PC-3 (cell line): ENCODE measurements at regions of chr19 and their contacts with region 1.

Region 1: DNA sequence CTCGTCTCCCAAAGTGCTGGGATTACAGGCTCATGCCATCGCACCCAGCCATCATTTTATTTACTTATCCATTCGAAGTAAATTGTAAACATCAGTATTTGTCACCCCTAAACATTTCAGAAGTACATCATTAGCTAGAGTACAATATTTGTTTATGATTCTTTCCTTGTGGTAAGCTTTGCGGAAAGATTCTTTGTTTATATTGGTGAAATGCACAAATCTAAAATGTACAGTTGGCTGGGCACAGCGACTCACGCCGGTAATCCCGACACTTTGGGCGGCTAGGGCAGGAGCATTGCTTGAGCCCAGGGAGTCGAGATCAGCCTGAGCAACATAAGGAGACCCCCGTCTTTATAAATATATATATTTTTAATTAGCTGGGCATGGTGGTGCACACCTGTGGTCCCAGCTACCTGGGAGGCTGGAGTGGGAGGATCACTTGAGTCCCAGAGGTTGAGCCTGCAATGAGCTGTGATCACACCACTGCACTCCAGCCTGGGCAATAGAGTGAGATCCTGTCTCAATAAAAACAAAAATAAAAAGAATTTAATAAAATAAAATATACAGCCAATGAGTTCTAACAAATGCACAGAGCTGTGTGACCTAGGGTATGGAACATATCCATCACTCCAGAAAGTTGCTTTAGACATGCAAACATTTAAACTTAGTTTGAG is 10.2 kb downstream of the LGALS7B start:
- DNase-seq: peak; percentile 7
- ATAC-seq: peak; percentile 16
- H3K4me3 ChIP-seq: no peak overlapping the region
- H3K27ac ChIP-seq: peak overlapping the region; percentile 82
- H3K4me1 ChIP-seq: peaks cover 8% of the 10 kb centered on the region
- H3K27me3 ChIP-seq: no peaks in the 10 kb centered on the region
- CTCF ChIP-seq: no peak

Region 2: DNA sequence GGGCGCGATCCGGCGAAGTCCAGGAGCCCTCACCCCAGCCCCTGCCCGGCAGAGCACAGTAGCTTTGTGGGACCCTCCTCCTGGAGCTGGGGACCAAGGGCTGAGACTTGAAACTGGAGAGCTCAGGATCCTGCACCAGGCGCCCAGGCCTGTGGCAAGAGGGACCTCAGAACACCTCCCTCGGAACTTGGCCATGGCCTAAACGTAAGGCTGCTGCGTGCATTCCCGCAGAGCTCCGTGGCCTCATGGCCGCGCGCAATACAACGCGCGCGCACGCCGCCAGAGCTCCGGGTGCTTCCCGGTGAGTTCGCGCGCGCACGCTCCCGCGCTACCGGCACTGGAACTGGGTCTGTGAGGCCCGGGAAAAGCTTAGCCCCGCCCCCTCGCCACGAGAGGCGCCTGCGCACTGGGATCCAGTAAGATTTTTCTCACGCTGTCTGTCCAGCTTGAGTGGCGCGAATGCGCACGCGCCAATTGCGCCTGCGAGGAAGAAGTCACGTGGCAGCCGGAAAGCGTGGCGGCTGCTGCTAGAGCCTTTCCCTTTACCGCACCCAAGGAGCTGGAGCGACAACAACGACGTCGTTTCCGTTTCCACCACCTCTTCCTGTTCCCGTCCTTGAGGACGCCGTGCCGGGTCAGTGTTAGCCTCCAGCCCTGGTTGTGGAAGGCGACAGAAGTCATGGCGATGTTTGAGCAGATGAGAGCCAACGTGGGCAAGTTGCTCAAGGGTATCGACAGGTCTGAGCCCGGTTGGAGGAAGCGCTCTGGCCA is 180.4 kb before region 1 on chr19 and contains the start of gene EIF3K:
- CTCF ChIA-PET with region 1: no interaction called
- POLR2A ChIA-PET with region 1: no interaction called
- intact Hi-C with region 1: no loop called
- DNase-seq: peak; percentile 98
- ATAC-seq: peak; percentile 92
- H3K4me3 ChIP-seq: peak within 1 kb of the TSS; percentile 92
- H3K27ac ChIP-seq: peak within 1 kb of the TSS; percentile 62
- H3K4me1 ChIP-seq: peaks cover 14% of the 10 kb centered on the region
- H3K27me3 ChIP-seq: no peaks in the 10 kb centered on the region
- CTCF ChIP-seq: no peak
- total RNA-seq, gene EIF3K: 310 and 414 TPM in 2 replicates

Region 3: GRCh38 chr19:38736413-38737280 is 62.6 kb before region 1 on chr19:
- CTCF ChIA-PET with region 1: no interaction called
- POLR2A ChIA-PET with region 1: no interaction called
- intact Hi-C with region 1: loop called (anchors 5 kb)
- DNase-seq: peak; percentile 65
- ATAC-seq: no peak
- H3K4me3 ChIP-seq: peak overlapping the region; percentile 52
- H3K27ac ChIP-seq: no peak overlapping the region
- H3K4me1 ChIP-seq: peaks cover 16% of the 10 kb centered on the region
- H3K27me3 ChIP-seq: no peaks in the 10 kb centered on the region
- CTCF ChIP-seq: no peak

Region 4: DNA sequence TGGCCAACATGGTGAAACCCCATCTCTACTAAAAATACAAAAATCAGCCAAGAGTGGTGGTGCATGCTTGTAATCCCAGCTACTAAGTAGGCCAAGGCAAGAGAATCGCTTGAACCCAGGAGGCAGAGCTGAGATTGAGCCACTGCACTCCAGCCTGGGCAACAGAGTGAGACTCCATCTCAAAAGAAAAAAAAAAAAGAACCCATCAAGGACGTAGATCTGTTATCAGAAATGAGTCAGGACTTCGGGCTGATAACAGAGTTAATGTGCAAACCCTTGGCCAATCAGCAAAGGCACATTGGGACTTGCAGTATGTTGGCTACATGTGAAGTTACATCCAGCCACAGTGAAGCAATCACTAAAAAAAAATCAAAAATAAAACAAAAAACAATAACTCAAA is 15.0 kb before region 1 on chr19:
- CTCF ChIA-PET with region 1: no interaction called
- POLR2A ChIA-PET with region 1: no interaction called
- intact Hi-C with region 1: no loop called
- DNase-seq: no peak
- ATAC-seq: no peak
- H3K4me3 ChIP-seq: no peak overlapping the region
- H3K27ac ChIP-seq: no peak overlapping the region
- H3K4me1 ChIP-seq: no peaks in the 10 kb centered on the region
- H3K27me3 ChIP-seq: no peaks in the 10 kb centered on the region
- CTCF ChIP-seq: no peak

Region 5: GRCh38 chr19:39124136-39124764 is 325.0 kb after region 1 on chr19:
- CTCF ChIA-PET with region 1: no interaction called
- POLR2A ChIA-PET with region 1: no interaction called
- intact Hi-C with region 1: no loop called
- DNase-seq: no peak
- ATAC-seq: no peak
- H3K4me3 ChIP-seq: no peak overlapping the region
- H3K27ac ChIP-seq: no peak overlapping the region
- H3K4me1 ChIP-seq: peaks cover 7% of the 10 kb centered on the region; the same call in 1 of the 2 replicates
- H3K27me3 ChIP-seq: no peaks in the 10 kb centered on the region
- CTCF ChIP-seq: no peak

Region 6: GRCh38 chr19:39263912-39264305 is 464.7 kb after region 1 on chr19:
- CTCF ChIA-PET with region 1: no interaction called
- POLR2A ChIA-PET with region 1: no interaction called
- intact Hi-C with region 1: no loop called
- DNase-seq: no peak
- ATAC-seq: no peak
- H3K4me3 ChIP-seq: no peak overlapping the region
- H3K27ac ChIP-seq: no peak overlapping the region
- H3K4me1 ChIP-seq: no peaks in the 10 kb centered on the region
- H3K27me3 ChIP-seq: peaks cover 5% of the 10 kb centered on the region; the same call in 1 of the 2 replicates
- CTCF ChIP-seq: no peak